Posterior vena cava (tissue), 2 donors: ENCODE measurements at regions of chr2 and their contacts with region 1.

Region 1: DNA sequence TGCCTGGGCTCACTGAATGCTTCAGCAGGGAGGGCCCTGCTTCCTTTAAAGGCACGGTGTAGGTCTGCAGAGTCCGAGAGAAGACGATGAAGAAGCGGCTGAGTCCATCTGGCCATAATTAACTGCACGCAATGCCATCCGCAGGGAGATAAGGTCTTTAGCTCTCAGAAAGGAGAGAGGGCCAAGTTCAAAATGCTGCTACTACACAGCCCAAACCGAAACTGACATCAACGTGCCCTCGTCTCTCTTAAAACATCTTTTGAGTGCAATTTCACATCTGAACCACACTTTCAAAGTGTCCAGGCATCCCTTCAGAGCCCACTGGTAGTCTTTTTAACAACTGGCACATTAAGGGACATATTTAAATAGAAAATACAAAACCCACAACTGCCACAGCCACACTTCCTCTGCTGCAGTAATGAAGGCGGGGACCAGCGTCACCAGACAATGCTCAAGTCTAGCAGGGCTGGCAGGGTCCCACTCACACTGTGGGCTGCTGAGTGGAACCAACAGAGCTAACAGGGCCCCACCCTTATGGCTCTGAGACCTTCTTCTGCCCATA is 35.8 kb downstream of the ST3GAL5 start:
- DNase-seq: no peak

Region 2: DNA sequence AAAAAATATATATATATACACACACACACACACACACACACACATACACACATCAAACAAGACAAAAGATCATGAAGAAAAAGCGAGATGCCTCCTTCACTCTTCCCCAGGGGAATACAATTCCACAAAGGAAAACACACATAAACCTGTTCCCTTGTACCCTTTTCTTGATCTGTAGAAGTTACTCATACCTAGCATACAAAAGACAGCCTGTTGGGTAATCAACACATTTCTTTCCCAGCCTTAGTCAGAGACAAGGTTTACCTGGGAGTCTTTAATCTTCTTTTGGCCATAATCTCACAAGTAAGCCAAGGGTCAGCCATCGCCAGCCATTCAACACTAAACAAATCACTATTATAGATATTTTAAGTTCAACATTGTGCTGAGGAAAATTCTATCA is 1801.0 kb before region 1 on chr2:
- intact Hi-C with region 1: no loop called
- DNase-seq: no peak

Region 3: GRCh38 chr2:85838181-85838580 is 14.8 kb before region 1 on chr2:
- intact Hi-C with region 1: loop called in 1 of 2 experiments (anchors 1 kb)
- DNase-seq: no peak